ENCODE measurements at regions of chr5 and their contacts with region 1.

Region 1: DNA sequence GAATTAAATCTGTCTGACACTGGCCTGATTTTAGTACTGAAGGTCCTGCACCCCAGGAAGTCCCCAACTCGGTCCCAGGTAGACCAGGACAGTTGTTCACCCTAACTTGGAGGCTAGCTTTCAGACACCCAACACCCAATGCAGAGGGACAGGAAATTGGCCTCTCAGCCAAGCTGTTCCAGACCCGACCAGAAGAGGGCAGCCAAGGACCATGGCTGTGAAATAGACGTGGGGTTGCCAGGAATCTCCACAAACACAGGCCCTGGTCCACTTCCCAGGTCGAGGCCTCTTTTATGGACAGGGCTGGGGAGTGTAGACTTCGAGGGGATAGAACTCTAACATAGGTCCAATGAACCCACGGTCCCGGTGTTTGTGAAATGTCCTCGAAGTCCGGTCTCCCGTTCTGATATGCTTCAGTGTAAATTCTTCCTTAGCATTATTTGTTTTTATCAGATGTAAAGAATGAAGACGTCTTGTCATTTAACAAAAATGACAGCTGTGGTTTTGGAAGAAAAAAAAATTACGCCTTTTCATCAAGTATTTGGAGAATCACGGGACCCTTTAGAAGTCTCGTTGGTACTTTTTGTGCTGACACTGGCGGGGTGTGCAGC is 260.3 kb upstream of the ADAMTS16 start:
- DNase-seq: peak; percentile 91

Region 2: DNA sequence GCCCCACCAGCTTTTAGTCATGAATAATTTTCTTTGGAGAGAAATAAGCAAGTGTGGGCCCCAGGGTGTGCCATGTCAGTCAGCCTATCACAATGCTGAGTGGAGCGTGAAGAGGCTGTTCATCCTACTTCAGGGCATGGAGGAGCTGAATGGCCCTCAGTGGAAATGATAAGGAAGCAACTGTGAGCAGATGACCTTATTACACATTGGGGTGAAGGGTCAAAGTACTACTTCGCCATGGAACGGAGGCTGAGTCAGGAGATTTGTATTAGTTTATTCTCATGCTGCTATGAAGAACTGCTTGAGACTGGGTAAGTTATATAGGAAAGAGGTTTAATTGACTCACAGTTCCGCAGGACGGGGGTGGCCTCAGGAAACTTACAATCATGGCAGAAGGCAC is 29.3 kb after region 1 on chr5:
- intact Hi-C with region 1: loop called in 1 of 2 experiments (anchors 2 kb)
- DNase-seq: no peak

Region 3: DNA sequence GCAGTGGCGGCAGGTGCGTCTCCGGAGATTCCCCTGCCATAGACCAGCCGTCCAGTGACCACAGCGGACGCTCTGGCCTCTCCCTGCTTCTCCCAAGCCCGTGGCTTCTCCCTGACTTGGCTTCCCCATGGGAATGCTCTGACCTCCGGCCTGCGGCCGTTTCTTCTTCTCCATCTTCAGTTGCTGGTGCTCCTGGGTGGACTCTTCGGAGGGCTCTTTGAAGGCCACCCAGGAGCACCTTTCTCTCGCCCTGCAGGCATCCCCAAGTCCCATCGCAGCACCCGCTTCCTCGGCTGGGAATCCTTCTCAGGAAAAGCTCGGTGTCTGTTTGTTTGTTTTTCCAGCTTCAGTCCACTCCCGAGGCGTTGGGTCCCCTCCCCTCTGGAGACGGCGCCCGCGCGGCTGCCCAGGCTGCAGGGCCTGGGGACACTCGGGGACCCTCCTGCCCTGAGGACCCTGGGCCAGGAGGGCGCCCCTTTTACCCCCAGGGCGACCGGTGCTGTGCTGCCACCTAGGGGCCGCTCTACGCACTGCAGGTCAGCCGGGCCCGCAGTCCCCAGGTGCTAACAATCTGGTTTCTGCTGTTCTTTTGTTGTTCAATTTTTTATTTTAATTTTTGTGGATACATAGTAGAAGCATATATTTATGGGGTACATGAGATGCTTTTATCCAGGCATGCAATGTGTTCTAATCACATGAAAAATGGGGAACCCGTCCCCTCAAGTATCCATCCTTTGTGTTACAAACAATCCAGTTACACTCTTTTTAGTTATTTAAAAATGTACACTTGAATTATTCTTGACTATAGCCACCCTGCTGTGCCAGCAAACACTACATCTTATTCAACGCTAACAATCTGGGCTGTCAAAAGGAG is 62.4 kb after region 1 on chr5:
- intact Hi-C with region 1: loop called (anchors 5 kb)
- DNase-seq: no peak

Region 4: GRCh38 chr5:5126444-5126843 is 246.6 kb after region 1 on chr5:
- intact Hi-C with region 1: loop called in 1 of 2 experiments (anchors 10 kb)
- DNase-seq: no peak

Region 5: DNA sequence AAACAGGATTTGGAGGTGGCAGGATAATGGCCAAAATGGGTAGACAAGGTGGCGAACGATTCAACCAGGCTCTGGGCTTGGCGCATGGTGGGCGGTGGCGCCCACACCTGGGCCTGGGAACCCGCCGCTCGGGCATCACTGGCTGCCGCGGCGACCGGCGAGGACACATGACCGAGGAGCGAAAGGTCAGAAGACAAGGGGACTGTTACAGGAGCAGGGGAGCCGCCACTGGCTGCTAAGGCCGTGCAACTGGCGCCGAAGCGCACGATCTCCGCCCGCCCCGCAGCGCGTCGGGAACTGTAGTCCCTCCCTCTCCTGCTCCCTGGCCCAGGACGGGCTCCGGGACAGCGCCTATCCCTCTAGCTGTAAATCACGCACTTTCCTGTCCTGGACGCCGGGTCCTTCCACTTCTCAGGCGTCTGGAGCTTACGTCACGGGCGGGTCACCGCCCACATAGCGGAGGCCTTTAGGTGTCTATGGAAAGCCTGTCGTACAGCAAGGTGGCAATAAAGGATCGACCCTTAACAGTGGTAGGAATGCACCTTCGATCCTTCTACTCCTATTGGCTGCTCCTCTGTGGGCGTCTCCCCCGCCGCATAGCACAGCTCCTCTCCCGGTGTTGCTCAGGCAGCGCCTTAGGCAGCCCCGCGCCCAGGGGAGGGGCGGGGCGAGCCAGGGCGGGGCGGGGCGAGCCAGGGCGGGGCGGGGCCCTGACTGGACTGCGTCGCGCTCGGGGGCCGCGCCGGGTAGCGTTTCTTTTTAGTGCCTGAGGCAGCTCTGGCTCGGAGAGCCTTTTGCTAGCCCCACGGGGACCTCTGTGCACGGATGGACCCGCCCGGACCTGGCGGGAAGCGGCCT is 542.4 kb after region 1 on chr5 and contains the start of gene ICE1:
- intact Hi-C with region 1: loop called (anchors 10 kb)
- DNase-seq: peak; percentile 99
- total RNA-seq, gene ICE1: 29.9 to 30.4 TPM